Calu3 (cell line): ENCODE measurements at regions of chr15 and their contacts with region 1.

Region 1: GRCh38 chr15:59611276-59612260 is at the start of gene GCNT3:
- DNase-seq: peak; percentile 65
- H3K4me3 Mint-ChIP-seq: peak within 1 kb of the TSS; percentile 60
- H3K27ac Mint-ChIP-seq: peak within 1 kb of the TSS; percentile 98
- H3K4me1 Mint-ChIP-seq: peaks cover 61% of the 10 kb centered on the region
- H3K27me3 Mint-ChIP-seq: peaks cover 7% of the 10 kb centered on the region
- CTCF ChIP-seq: no peak
- total RNA-seq, gene GCNT3: 11.6 and 15.4 TPM in 2 replicates

Region 2: GRCh38 chr15:59553879-59554735 is 57.5 kb before region 1 on chr15:
- CTCF ChIA-PET with region 1: interaction called, 10 read pairs
- intact Hi-C with region 1: no loop called
- DNase-seq: peak; percentile 66
- H3K4me3 Mint-ChIP-seq: no peak overlapping the region
- H3K27ac Mint-ChIP-seq: peak overlapping the region; percentile 56
- H3K4me1 Mint-ChIP-seq: peaks cover 50% of the 10 kb centered on the region
- H3K27me3 Mint-ChIP-seq: no peaks in the 10 kb centered on the region
- CTCF ChIP-seq: no peak

Region 3: GRCh38 chr15:59570368-59570767 is 41.2 kb before region 1 on chr15:
- CTCF ChIA-PET with region 1: interaction called, 6 read pairs
- intact Hi-C with region 1: loop called (anchors 2 kb)
- DNase-seq: peak; percentile 68
- H3K4me3 Mint-ChIP-seq: peak overlapping the region; percentile 19
- H3K27ac Mint-ChIP-seq: peak overlapping the region; percentile 95
- H3K4me1 Mint-ChIP-seq: peaks cover 44% of the 10 kb centered on the region
- H3K27me3 Mint-ChIP-seq: no peaks in the 10 kb centered on the region
- CTCF ChIP-seq: no peak

Region 4: DNA sequence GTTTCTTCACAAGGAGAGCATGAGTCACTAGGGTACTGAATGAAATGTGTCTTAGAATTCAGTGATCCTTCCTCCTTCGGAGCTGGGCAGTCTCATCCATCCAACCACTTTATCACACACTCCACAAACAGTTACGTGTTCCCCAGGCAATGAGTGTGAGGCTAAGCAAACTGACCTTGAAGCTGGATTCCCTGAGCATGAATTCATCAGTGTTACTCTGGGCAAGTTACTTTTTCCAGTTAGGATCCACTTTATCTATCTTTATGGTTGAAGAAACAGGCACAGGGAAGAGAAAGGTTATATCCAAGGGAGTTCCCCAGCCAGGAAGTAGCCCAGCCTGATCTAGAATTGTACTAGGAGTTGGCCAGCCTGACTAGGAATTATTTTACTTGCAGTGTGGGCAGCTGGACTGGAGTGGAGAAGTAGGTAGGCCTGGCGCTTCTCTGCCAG is 17.1 kb before region 1 on chr15:
- CTCF ChIA-PET with region 1: interaction called, 29 read pairs
- intact Hi-C with region 1: loop called (anchors 2 kb)
- DNase-seq: peak; percentile 61
- H3K4me3 Mint-ChIP-seq: peak overlapping the region; percentile 16
- H3K27ac Mint-ChIP-seq: peak overlapping the region; percentile 95
- H3K4me1 Mint-ChIP-seq: peaks cover 61% of the 10 kb centered on the region
- H3K27me3 Mint-ChIP-seq: no peaks in the 10 kb centered on the region
- CTCF ChIP-seq: no peak